ENCODE measurements at regions of chr6 and their contacts with region 1.

Region 1: GRCh38 chr6:74798302-74798701 is 407.6 kb downstream of the COL12A1 start:
- DNase-seq: no peak
- ATAC-seq: no peak
- H3K4me3 ChIP-seq: no peak overlapping the region
- H3K27ac ChIP-seq: no peak overlapping the region
- H3K4me1 ChIP-seq: no peaks in the 10 kb centered on the region
- H3K27me3 ChIP-seq: no peaks in the 10 kb centered on the region
- CTCF ChIP-seq: no peak

Region 2: DNA sequence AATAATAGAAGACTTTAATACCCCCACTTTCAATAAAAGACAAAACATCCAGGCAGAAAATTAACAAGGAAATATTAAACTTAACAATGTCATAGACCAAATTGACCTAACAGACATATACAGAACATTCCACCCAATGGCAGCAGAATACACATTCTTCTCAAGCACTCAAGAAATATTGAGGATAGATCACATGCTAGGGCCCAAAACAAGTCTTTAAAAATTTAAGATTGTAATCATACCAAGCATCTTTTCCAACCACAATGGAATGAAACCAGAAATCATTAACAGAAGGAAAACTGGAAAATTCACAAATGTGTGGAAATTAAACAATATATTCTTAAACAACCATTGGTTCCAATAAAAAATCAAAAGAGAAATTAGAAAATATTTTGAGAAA is 246.5 kb after region 1 on chr6:
- CTCF ChIA-PET with region 1: no interaction called
- POLR2A ChIA-PET with region 1: no interaction called
- in situ Hi-C with region 1: no loop called
- intact Hi-C with region 1: no loop called
- DNase-seq: no peak
- ATAC-seq: no peak
- H3K4me3 ChIP-seq: no peak overlapping the region
- H3K27ac ChIP-seq: no peak overlapping the region
- H3K4me1 ChIP-seq: no peaks in the 10 kb centered on the region
- H3K27me3 ChIP-seq: no peaks in the 10 kb centered on the region
- CTCF ChIP-seq: no peak

Region 3: GRCh38 chr6:75402296-75402695 is 604.0 kb after region 1 on chr6:
- CTCF ChIA-PET with region 1: no interaction called
- POLR2A ChIA-PET with region 1: interaction called, 12 read pairs
- in situ Hi-C with region 1: no loop called
- intact Hi-C with region 1: no loop called
- DNase-seq: no peak
- ATAC-seq: no peak
- H3K4me3 ChIP-seq: no peak overlapping the region
- H3K27ac ChIP-seq: no peak overlapping the region
- H3K4me1 ChIP-seq: no peaks in the 10 kb centered on the region
- H3K27me3 ChIP-seq: peaks cover 3% of the 10 kb centered on the region; the same call in 1 of the 2 replicates
- CTCF ChIP-seq: no peak